Activated B cell treated with CpG ODN at 0.5 μM for 24 hours (primary cell): ENCODE measurements at regions of chr22 and their contacts with region 1.

Region 1: DNA sequence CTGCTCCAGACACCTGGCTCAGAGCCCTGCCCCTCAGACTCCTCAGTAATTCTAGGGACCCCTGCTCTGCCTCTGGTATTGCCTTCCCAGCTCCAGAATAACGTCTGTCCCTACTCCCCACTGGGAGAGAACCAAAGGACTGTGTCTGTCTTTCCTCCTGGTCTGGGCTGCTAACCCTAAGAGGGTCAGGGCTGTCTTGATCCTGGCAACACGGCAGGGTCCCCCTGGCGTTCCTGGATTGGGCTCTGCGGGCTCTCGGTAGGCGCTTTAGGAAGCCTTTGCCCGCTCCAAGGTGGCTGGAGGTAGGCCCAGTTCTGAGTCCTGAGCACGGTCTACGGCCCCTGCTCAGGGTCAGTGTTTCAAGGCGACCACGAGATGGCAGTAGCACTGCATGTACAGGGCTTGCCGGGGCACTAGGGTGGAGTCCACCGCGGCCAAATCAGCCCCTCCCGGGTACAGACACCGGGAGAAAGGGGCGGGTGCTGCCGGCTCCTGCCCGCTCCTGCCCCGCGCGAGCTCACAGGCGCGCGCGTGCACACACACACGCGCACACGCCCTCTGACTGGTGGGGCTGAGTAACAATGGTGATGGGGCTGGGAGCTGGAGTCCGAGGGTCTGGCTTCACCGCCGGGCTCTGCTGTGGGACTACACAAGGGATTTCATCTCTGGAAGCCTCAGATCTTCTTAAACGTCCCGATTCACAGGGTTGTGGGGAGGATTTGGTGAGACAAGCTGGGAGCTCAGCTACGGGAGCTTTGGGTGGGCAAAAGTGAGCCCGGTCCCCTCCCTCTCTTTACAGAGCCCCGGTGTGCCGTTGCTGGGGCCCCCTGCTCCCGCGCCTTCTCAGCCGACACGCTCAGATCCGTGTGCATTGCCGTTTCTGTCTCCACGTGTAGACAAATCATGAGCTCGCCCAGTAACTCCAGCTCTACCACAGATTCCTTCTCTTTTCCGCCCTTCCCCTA is 30.1 kb upstream of the HMOX1 start:
- DNase-seq: peak; percentile 82
- ATAC-seq: peak; percentile 64
- H3K4me3 Mint-ChIP-seq: peak overlapping the region; percentile 86
- H3K27ac Mint-ChIP-seq: peak overlapping the region; percentile 98
- H3K4me1 Mint-ChIP-seq: peaks cover 59% of the 10 kb centered on the region
- H3K27me3 Mint-ChIP-seq: no peaks in the 10 kb centered on the region
- CTCF ChIP-seq: peak; percentile 79

Region 2: DNA sequence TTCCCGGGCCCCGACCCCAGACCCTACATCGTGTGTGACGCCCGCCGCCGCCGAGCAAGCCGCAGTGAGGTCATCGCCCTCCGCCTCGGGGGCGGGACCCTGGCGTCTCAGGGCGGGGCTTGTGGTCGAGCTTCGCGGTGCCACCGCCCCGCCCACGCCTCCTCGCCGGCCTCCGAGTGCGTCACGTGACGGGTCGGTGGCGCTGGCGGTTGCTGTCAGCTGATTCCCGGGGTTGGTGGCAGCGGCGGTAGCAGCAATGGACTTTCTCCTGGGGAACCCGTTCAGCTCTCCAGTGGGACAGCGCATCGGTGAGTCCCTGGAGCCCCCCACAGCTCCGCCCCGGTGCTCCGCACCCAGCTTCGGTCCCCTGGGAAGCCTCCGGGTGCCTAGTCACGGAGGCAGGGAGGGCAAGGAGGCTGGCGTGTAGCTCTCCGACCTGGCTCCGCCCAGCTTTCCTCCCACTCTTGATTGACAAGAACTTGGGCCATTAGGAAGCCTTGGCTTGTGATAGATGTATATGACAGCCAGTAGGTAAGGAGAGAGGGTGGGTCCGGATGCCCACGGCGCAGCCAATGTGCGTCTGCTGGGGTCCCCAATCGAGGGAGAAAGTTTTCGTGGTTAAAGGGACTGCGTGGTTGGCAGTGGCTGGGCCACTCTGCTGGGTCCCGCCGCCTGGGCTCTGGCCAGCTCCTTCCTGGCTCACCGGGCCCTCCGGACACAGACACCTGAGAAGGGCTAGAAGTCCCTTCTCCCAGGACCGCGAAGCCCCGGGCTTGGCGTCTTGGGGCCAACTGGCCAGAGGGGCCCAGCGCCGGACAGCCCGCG is 50.9 kb before region 1 on chr22 and contains the start of gene TOM1:
- CTCF ChIA-PET with region 1: no interaction called
- POLR2A ChIA-PET with region 1: interaction called, 12 read pairs
- intact Hi-C with region 1: loop called (anchors 1 kb)
- DNase-seq: peak; percentile 98
- ATAC-seq: peak; percentile 93
- H3K4me3 Mint-ChIP-seq: peak within 1 kb of the TSS; percentile 92
- H3K27ac Mint-ChIP-seq: peak within 1 kb of the TSS; percentile 91
- H3K4me1 Mint-ChIP-seq: peaks cover 20% of the 10 kb centered on the region
- H3K27me3 Mint-ChIP-seq: no peaks in the 10 kb centered on the region
- CTCF ChIP-seq: no peak
- total RNA-seq, gene TOM1: 32.2 and 40.8 TPM in 2 replicates

Region 3: GRCh38 chr22:35399678-35400334 is 49.0 kb after region 1 on chr22 and contains the start of gene MCM5:
- CTCF ChIA-PET with region 1: interaction called, 5 read pairs
- POLR2A ChIA-PET with region 1: interaction called, 22 read pairs
- intact Hi-C with region 1: loop called (anchors 1 kb)
- DNase-seq: peak; percentile 87
- ATAC-seq: peak; percentile 96
- H3K4me3 Mint-ChIP-seq: peak within 1 kb of the TSS; percentile 99
- H3K27ac Mint-ChIP-seq: peak within 1 kb of the TSS; percentile 99
- H3K4me1 Mint-ChIP-seq: peaks cover 57% of the 10 kb centered on the region
- H3K27me3 Mint-ChIP-seq: no peaks in the 10 kb centered on the region
- CTCF ChIP-seq: no peak
- total RNA-seq, gene MCM5: 176 and 178 TPM in 2 replicates

Region 4: GRCh38 chr22:35539910-35540594 is 189.2 kb after region 1 on chr22:
- CTCF ChIA-PET with region 1: no interaction called
- POLR2A ChIA-PET with region 1: interaction called, 4 read pairs
- intact Hi-C with region 1: loop called (anchors 1 kb)
- DNase-seq: peak; percentile 78
- ATAC-seq: peak; percentile 97
- H3K4me3 Mint-ChIP-seq: peak overlapping the region; percentile 72
- H3K27ac Mint-ChIP-seq: no peak overlapping the region
- H3K4me1 Mint-ChIP-seq: peaks cover 10% of the 10 kb centered on the region
- H3K27me3 Mint-ChIP-seq: peaks cover 32% of the 10 kb centered on the region
- CTCF ChIP-seq: no peak

Region 5: DNA sequence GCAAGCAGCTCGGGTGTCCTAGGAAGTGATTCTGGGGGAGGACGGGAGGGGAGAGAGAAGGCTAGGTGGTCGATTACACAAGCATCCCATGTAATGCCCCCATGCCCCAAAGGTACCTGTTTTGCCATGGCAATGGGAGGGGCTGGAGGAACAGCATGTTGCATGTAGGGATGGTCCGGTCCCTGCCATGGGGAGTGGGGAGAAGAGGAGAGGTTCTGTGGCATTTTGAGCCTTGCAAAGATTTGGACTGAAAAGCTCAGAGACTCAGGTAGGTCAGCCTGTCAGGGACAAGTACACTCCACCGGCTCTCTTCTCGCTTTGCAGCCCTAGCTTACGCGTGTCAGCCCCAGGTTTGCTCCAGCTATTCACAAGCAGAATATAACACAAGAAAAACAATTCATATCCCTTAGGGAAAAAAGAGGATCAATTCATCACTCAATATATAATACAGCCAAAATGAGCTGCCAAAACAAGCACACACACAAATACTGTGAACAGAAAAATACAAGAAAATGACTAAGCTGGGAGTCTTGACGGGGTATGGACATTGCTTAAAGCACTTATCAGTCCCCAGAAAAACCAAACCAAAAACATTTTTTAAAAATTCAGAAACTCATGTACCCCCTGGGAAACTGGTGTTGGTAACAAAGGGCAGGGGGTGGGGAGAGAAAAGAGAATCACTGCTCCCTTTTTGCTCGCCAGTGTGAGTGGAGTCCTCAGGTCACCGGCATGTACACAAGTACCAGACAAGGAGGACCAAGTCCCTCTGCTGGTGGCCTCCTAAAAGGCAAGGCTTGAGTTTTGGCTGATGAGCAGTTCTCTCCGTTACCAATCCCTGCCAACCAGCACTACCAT is 388.5 kb after region 1 on chr22:
- CTCF ChIA-PET with region 1: no interaction called
- POLR2A ChIA-PET with region 1: no interaction called
- intact Hi-C with region 1: no loop called
- DNase-seq: no peak
- ATAC-seq: no peak
- H3K4me3 Mint-ChIP-seq: no peak overlapping the region
- H3K27ac Mint-ChIP-seq: no peak overlapping the region
- H3K4me1 Mint-ChIP-seq: peaks cover 4% of the 10 kb centered on the region
- H3K27me3 Mint-ChIP-seq: peaks cover 76% of the 10 kb centered on the region
- CTCF ChIP-seq: no peak

Region 6: DNA sequence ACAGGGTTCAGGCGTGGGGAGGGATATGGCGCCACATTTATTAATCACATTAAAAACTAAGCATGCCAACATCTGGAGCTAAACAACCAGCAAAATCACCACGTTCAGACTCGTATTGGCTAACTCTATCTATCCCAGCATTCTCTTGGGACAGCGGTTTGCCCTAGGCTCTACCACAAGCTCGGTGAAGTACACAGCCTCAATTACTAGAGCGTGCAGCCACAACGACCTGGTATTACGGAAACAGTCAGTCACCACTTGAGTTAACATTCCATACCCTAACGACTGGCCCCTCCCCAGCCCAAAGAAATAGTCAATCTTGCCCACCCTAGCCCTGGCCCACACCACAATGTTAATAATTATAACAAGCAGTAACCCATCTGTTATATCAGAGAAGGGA is 399.0 kb after region 1 on chr22:
- CTCF ChIA-PET with region 1: no interaction called
- POLR2A ChIA-PET with region 1: no interaction called
- intact Hi-C with region 1: loop called (anchors 5 kb)
- DNase-seq: peak; percentile 42
- ATAC-seq: peak; percentile 95
- H3K4me3 Mint-ChIP-seq: peak overlapping the region; percentile 53
- H3K27ac Mint-ChIP-seq: peak overlapping the region; percentile 24
- H3K4me1 Mint-ChIP-seq: peaks cover 29% of the 10 kb centered on the region
- H3K27me3 Mint-ChIP-seq: peaks cover 62% of the 10 kb centered on the region
- CTCF ChIP-seq: no peak

Region 7: DNA sequence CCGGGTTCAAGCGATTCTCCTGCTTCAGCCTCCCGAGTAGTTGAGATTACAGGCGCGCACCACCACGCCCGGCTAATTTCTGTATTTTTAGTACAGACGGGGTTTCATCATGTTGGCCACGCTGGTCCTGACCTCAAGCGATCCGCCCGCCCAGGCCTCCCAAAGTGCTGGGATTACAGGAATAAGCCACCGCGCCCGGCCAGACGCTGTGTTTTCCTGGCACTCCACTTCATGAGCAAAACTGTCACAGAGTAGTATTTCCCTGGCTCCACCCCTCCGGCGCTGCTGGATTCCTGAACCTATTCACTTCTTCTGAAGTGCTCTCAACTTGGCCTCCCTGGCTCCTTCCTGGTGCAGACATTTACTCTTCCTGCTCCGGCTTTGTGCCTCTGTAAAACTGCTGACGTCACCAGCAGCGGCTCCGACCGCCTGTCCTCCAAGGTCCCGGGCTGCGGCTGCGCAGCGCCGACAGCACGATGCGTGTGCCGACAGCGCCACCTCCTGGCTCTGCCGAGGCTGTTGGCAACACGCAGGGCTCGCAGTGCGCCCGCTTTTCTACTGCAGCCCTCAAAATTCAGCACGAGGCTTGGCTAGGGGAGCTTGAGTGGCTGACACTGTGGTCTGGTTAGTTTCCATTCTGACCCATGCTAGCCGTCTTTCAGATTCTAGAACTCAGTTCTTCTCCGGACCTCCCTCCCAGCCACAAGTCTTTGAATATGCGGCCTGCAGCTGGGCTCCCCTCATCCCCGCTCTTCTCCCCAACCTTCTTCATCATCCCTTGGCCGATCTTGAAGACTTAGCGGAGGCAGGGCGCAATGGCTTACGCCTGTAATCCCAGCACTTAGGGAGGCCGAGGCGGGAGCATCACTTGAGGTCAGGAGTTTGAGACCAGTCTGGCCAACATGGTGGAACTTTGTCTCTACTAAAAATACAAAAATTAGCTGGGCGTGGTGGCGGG is 773.1 kb after region 1 on chr22:
- CTCF ChIA-PET with region 1: interaction called, 9 read pairs
- POLR2A ChIA-PET with region 1: no interaction called
- intact Hi-C with region 1: loop called (anchors 1 kb)
- DNase-seq: peak; percentile 85
- ATAC-seq: peak; percentile 100
- H3K4me3 Mint-ChIP-seq: peak overlapping the region; percentile 81
- H3K27ac Mint-ChIP-seq: peak overlapping the region; percentile 68
- H3K4me1 Mint-ChIP-seq: peaks cover 8% of the 10 kb centered on the region
- H3K27me3 Mint-ChIP-seq: peaks cover 8% of the 10 kb centered on the region
- CTCF ChIP-seq: peak; percentile 59